Calu3 (cell line): ENCODE measurements at regions of chr1 and their contacts with region 1.

Region 1: GRCh38 chr1:47388891-47389238 is 27.2 kb upstream of the FOXE3 start:
- DNase-seq: peak; percentile 81
- H3K4me3 Mint-ChIP-seq: no peak overlapping the region
- H3K27ac Mint-ChIP-seq: no peak overlapping the region
- H3K4me1 Mint-ChIP-seq: no peaks in the 10 kb centered on the region
- H3K27me3 Mint-ChIP-seq: peaks cover 22% of the 10 kb centered on the region
- CTCF ChIP-seq: peak; percentile 88

Region 2: GRCh38 chr1:47313915-47314664 is 74.8 kb before region 1 on chr1 and contains the start of gene STIL:
- CTCF ChIA-PET with region 1: no interaction called
- intact Hi-C with region 1: no loop called
- DNase-seq: peak; percentile 98
- H3K4me3 Mint-ChIP-seq: peak within 1 kb of the TSS; percentile 92
- H3K27ac Mint-ChIP-seq: peak within 1 kb of the TSS; percentile 94
- H3K4me1 Mint-ChIP-seq: peaks cover 8% of the 10 kb centered on the region
- H3K27me3 Mint-ChIP-seq: no peaks in the 10 kb centered on the region
- CTCF ChIP-seq: no peak
- total RNA-seq, gene STIL: 52.5 and 62.4 TPM in 2 replicates

Region 3: GRCh38 chr1:47424336-47424982 is 35.6 kb after region 1 on chr1:
- CTCF ChIA-PET with region 1: interaction called, 3 read pairs
- intact Hi-C with region 1: loop called (anchors 5 kb)
- DNase-seq: peak; percentile 56
- H3K4me3 Mint-ChIP-seq: no peak overlapping the region
- H3K27ac Mint-ChIP-seq: no peak overlapping the region
- H3K4me1 Mint-ChIP-seq: peaks cover 17% of the 10 kb centered on the region
- H3K27me3 Mint-ChIP-seq: no peaks in the 10 kb centered on the region
- CTCF ChIP-seq: peak; percentile 77